ENCODE measurements at regions of chr11 and their contacts with region 1.

Region 1: DNA sequence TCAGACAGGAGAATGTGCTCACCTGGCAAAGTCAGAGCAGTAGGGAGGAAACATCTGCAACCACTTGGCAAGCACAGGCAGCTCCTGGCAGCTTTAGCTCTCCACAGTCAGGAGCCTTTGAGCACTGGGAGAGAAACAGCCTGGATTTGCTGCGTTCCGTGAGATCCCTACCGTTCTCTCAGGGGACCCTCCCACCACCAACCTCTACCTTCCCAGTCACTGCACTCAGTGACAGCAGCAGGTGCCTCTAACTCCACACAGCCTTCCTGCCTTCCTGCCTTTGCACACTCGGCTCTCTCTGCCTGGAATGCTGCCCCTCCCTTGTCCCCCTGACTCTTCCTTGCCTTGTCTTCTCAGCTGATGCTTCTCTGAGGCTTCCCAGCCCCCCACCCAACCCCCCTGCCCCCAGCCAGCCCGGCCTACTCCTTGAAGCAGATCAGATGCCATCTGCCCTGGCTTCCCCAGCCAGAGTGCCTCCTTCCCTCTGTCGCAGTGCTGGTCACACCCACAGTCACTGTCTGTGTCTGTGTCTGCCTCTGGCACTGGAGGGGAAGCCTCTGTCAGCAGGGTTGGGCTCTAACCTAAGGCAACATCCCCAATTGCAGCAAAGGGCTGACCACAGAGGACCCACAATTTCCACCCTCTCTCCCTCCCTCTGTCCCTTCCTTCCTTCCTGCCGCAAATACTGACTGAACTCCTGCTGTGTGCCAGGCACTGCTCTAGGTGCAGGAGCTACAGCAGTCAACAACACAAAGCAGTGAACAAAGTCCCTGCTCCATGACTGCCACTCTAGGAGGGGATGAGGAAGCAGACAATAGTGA is 14.9 kb upstream of the TSKU start:
- DNase-seq: peak; percentile 83
- H3K4me3 Mint-ChIP-seq: peak overlapping the region; percentile 16
- H3K27ac Mint-ChIP-seq: peak overlapping the region; percentile 49
- H3K4me1 Mint-ChIP-seq: peaks cover 29% of the 10 kb centered on the region
- H3K27me3 Mint-ChIP-seq: peaks cover 3% of the 10 kb centered on the region

Region 2: GRCh38 chr11:76782526-76783293 is 14.4 kb after region 1 on chr11:
- intact Hi-C with region 1: loop called (anchors 2 kb)
- DNase-seq: peak; percentile 87
- H3K4me3 Mint-ChIP-seq: peak overlapping the region; percentile 82
- H3K27ac Mint-ChIP-seq: peak overlapping the region; percentile 88
- H3K4me1 Mint-ChIP-seq: peaks cover 31% of the 10 kb centered on the region
- H3K27me3 Mint-ChIP-seq: peaks cover 59% of the 10 kb centered on the region